ENCODE measurements at regions of chr12 and their contacts with region 1.

Region 1: DNA sequence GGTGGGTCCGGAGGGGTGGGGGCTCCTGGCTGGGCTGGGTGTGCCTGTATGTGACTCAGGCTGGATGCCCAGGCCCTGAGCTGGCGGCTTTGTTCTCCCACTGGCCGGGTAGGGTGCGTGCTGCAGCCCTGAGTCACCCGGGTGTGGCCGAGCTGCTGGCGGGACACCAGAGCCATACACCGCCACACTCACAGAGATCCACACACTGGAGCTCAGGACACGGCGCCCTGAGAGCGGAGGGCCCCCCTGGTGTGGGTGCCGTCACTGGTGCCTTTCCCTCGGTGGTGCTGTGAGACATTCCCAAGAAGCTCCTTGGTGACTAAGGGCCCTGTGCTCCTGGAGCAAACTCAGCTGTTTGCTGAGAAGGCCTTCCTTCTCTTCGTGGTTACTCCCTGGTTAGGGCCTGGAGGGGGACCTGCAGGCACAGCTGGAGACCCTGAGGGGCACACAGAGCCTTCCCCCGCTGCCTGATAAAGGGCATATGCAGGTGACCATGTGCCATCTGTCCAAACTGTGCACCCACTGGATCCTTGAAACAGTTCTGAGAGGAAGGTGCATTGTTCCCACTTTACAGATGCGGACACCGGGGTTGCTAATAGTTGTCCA is 44.3 kb downstream of the KRT80 start:
- DNase-seq: peak; percentile 91 to 99
- H3K4me3 ChIP-seq: no peak overlapping the region
- H3K27ac ChIP-seq: peak overlapping the region; percentile 80 to 89
- H3K4me1 ChIP-seq: peaks cover 7 to 34% of the 10 kb centered on the region in 2 donors
- H3K27me3 ChIP-seq: no peaks in the 10 kb centered on the region
- CTCF ChIP-seq: no peak

Region 2: GRCh38 chr12:52004042-52004648 is 143.3 kb before region 1 on chr12:
- intact Hi-C with region 1: no loop called
- DNase-seq: peak in 1 of 2 donors; percentile 78
- H3K4me3 ChIP-seq: no peak overlapping the region
- H3K27ac ChIP-seq: no peak overlapping the region
- H3K4me1 ChIP-seq: peaks cover 0 to 16% of the 10 kb centered on the region in 2 donors
- H3K27me3 ChIP-seq: no peaks in the 10 kb centered on the region
- CTCF ChIP-seq: peak; percentile 52 to 76 (median 72)

Region 3: DNA sequence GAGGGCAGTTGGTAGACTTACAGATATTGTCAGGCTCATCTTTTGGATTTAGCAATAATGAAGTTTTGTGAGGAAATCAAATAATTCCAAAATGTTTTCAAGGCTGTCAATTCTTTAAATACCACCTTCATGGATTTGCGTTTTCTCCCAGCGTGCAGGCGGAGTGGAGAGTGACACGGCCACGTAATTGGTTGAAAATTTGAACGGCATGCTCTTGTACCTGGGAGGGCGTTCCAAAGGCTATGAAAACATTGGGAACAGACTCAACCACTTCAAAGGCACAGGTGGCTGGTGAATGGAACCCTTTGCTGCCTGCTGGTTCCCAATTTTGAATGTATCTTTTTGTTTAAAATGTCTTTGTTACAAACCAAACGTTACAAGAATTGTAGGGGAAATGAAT is 55.6 kb before region 1 on chr12:
- intact Hi-C with region 1: no loop called
- DNase-seq: no peak
- H3K4me3 ChIP-seq: no peak overlapping the region
- H3K27ac ChIP-seq: no peak overlapping the region
- H3K4me1 ChIP-seq: no peaks in the 10 kb centered on the region
- H3K27me3 ChIP-seq: no peaks in the 10 kb centered on the region
- CTCF ChIP-seq: no peak

Region 4: GRCh38 chr12:52221912-52222457 is 74.5 kb after region 1 on chr12:
- intact Hi-C with region 1: no loop called
- DNase-seq: peak in 1 of 2 donors; percentile 85
- H3K4me3 ChIP-seq: no peak overlapping the region
- H3K27ac ChIP-seq: peak overlapping the region; percentile 22 to 54
- H3K4me1 ChIP-seq: peaks cover 7 to 44% of the 10 kb centered on the region in 2 donors
- H3K27me3 ChIP-seq: no peaks in the 10 kb centered on the region
- CTCF ChIP-seq: peak in 2 of 3 experiments; percentile 36 to 45

Region 5: DNA sequence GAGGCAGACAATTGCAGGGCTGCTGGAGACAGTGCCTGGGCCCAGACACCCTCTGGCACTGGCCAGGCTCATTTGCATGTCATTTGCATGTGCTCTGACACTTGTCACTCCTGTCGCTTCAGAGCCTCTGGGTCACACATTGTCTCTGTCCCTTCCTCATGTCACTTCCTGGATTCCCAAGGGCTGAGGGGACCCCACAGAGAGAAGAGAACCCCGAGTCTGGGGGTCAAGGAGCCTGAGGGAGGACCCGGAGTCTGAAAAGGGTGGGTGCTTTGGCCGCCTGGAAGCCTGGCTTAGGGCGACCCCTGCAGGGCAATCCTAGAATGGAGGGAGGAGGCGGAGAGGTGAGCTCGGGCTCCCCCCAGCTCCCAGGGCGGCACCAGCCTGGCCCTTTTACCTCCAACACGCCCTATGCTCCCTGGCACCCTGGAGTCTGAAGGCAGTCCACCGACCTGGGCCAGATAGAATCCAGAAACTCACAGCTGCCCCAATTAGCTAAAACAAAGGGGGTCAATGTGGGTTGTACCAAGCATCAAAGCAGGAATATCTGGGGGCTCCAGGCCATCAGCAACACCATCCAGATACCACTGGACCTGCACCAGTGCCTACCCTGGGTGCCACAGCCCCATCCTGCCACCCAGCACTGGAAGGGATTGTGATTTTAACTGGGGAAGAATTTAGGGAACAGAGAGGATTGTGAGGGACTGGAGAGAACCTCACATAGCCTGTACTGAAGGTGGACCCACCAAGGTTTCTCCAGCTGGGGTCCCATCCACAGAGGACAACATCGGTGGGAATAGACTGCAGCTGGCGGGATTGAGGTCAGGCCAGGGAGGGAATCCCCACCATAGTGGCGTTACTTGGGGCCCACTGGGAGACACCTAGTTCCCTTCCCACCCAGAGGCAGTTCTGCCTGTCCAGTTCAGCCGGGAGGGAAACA is 723.2 kb after region 1 on chr12:
- intact Hi-C with region 1: loop called (anchors 5 kb)
- DNase-seq: peak in 1 of 2 donors; percentile 72
- H3K4me3 ChIP-seq: no peak overlapping the region
- H3K27ac ChIP-seq: peak overlapping the region; percentile 12 to 56
- H3K4me1 ChIP-seq: peaks cover 3 to 19% of the 10 kb centered on the region in 2 donors
- H3K27me3 ChIP-seq: no peaks in the 10 kb centered on the region
- CTCF ChIP-seq: peak; percentile 25 to 47 (median 34)

Region 6: DNA sequence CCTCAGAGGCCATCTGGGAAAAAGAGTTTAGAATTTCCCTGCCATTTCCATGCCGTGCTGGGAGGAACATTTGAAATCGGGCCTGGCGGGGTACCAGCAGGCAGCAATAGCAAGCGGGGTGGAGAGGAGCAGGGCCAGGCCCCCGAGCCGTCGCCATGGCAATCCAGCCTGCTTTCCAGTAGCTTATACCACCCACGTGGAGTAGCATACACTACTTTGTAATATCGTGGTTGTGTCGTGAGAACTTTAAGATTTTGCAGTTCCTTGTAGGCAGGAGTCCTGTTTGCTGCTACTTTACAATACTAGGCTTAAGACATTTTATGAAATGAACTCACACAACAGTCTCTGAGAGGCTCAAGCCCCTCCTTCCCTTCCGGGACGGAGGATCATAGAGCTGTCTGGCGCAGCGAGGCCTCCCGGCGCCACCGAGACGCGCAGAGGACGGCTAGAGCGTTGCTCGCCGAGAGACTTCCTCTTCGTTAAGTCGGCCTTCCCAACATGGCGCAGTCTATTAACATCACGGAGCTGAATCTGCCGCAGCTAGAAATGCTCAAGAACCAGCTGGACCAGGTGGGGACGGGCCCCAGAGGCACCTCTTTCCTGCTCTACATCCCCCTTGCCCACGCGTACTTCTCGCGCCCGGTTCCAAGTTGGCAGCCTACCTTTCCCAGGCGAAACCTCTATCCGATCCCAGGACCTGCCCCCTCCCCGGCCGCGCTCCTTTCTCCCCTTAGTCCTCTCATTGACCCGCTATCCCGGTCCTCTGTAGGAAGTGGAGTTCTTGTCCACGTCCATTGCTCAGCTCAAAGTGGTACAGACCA is 1147.8 kb after region 1 on chr12 and contains the start of gene PFDN5:
- intact Hi-C with region 1: no loop called
- DNase-seq: peak; percentile 49 to 94
- H3K4me3 ChIP-seq: peak within 1 kb of the TSS; percentile 56 to 90
- H3K27ac ChIP-seq: peak within 1 kb of the TSS; percentile 85 to 92
- H3K4me1 ChIP-seq: peaks cover 10 to 20% of the 10 kb centered on the region in 2 donors
- H3K27me3 ChIP-seq: no peaks in the 10 kb centered on the region
- CTCF ChIP-seq: no peak
- total RNA-seq, gene PFDN5: 187 TPM